ENCODE measurements at regions of chr13 and their contacts with region 1.

Region 1: GRCh38 chr13:45119991-45120864 is at the start of gene GTF2F2:
- DNase-seq: peak; percentile 85
- H3K4me3 Mint-ChIP-seq: no peak within 1 kb of the TSS
- H3K27ac Mint-ChIP-seq: no peak within 1 kb of the TSS
- H3K4me1 Mint-ChIP-seq: peaks cover 8% of the 10 kb centered on the region
- H3K27me3 Mint-ChIP-seq: no peaks in the 10 kb centered on the region
- CTCF ChIP-seq: no peak
- total RNA-seq, gene GTF2F2: 41.2 and 47.4 TPM in 2 replicates

Region 2: DNA sequence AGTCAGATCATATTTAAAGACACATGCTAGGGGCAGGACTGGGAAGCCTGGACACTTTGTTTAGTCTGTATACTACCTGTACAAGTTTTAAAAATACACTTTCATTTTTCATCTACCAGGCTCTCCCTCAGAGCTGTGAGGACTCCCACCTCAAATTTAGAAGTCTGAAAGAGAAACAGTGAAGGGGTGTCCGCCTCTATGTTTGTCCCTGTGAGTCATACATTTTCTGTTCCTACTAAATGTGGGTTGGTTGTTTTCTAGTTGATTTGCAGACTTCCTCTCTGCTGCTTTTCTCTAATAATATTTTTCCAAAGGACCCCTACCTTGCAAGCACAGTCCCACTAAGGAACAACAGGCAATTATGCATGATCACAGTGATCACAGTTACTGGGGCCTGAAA is 1443.9 kb before region 1 on chr13:
- CTCF ChIA-PET with region 1: no interaction called
- POLR2A ChIA-PET with region 1: no interaction called
- intact Hi-C with region 1: no loop called
- DNase-seq: no peak
- H3K4me3 Mint-ChIP-seq: no peak overlapping the region
- H3K27ac Mint-ChIP-seq: no peak overlapping the region
- H3K4me1 Mint-ChIP-seq: no peaks in the 10 kb centered on the region
- H3K27me3 Mint-ChIP-seq: no peaks in the 10 kb centered on the region
- CTCF ChIP-seq: no peak

Region 3: DNA sequence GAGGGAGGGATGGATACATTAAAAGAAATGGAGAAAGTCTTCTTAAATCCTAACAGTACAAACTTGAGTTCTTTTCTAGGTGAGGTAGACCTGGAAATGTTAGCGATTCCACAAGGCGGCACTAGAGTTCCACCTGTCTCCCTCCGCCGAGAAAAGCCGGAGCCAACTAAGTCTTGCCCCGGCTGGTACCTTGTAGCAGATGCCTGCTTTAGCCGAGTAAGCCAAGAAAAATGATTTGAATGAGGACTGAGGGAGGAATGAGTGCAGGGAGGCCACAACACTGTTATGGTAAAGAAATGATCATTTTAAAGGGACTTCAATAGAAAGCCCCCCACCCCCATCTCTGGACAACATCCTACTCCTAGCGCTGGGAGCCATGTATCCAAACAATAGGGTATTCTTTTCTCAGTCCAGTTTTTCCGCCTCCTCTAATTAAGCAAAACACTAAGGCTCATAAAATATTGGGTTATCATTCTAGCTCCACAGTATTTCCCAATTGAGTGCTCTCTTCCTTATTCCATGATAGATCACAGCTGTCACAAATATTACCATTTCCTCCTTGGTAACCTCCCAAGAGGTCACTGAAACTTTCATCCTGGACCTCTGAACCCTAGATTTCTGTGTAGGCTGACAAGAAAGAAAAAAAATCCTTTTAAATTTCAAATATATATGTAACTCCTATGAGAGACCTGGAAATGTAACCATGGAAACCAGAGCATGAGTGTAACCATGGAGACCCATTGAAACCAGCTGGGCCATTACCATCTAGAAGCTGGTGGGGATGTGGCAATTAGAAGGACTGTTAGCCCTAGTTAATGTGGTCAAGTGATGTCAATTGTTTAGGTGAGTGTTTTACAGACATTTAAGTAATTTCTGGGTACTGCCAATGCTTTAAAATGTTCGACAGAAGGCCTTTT is 72.6 kb before region 1 on chr13:
- CTCF ChIA-PET with region 1: interaction called, 6 read pairs
- POLR2A ChIA-PET with region 1: interaction called, 21 read pairs
- intact Hi-C with region 1: loop called (anchors 2 kb)
- DNase-seq: peak; percentile 86
- H3K4me3 Mint-ChIP-seq: peak overlapping the region; percentile 64
- H3K27ac Mint-ChIP-seq: no peak overlapping the region
- H3K4me1 Mint-ChIP-seq: peaks cover 10% of the 10 kb centered on the region
- H3K27me3 Mint-ChIP-seq: no peaks in the 10 kb centered on the region
- CTCF ChIP-seq: peak; percentile 92

Region 4: GRCh38 chr13:45133396-45134118 is 13.3 kb after region 1 on chr13:
- CTCF ChIA-PET with region 1: interaction called, 3 read pairs
- POLR2A ChIA-PET with region 1: interaction called, 46 read pairs
- intact Hi-C with region 1: no loop called
- DNase-seq: no peak
- H3K4me3 Mint-ChIP-seq: no peak overlapping the region
- H3K27ac Mint-ChIP-seq: no peak overlapping the region
- H3K4me1 Mint-ChIP-seq: peaks cover 30% of the 10 kb centered on the region
- H3K27me3 Mint-ChIP-seq: no peaks in the 10 kb centered on the region
- CTCF ChIP-seq: no peak

Region 5: DNA sequence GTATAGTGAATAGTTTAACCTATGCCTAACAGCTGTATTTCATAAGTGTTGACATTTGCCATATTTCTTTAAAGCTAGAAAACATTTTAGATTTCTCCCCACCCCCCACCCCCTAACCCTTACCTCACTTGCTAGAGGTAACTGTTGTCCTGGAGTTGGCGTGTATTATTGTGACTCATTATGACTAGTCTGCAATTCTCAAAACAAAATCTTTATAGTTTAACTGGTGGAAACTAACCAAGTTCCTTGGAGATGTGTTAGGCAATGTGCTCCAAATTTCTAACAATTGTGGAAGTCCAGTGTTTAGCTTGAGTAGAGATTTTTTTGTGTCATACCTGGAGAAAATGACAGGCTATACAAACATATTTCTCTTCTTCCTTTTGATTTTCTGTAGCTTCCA is 42.6 kb after region 1 on chr13:
- CTCF ChIA-PET with region 1: no interaction called
- POLR2A ChIA-PET with region 1: interaction called, 87 read pairs
- intact Hi-C with region 1: no loop called
- DNase-seq: peak; percentile 92
- H3K4me3 Mint-ChIP-seq: peak overlapping the region; percentile 35
- H3K27ac Mint-ChIP-seq: peak overlapping the region; percentile 91
- H3K4me1 Mint-ChIP-seq: peaks cover 9% of the 10 kb centered on the region
- H3K27me3 Mint-ChIP-seq: no peaks in the 10 kb centered on the region
- CTCF ChIP-seq: no peak

Region 6: DNA sequence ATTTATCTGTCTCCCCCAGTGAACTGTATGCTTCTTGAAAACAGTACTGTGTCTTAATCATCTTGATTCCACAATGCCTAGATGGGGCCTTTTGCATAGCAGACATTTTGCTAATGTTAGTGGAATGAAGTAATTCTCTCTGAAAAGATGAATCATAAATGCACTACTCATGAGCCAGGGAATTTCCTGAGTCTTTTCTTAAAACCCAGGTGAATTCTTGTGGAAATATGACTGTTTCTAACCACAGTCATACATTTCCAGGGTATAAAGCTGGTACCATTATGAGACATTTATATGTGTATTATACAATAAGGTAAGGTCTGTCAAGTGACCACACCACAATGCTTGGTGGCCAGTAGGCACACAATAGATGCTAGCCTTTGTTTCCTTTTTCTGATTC is 86.1 kb after region 1 on chr13:
- CTCF ChIA-PET with region 1: no interaction called
- POLR2A ChIA-PET with region 1: interaction called, 15 read pairs
- intact Hi-C with region 1: no loop called
- DNase-seq: peak; percentile 88
- H3K4me3 Mint-ChIP-seq: peak overlapping the region; percentile 56
- H3K27ac Mint-ChIP-seq: peak overlapping the region; percentile 88
- H3K4me1 Mint-ChIP-seq: peaks cover 47% of the 10 kb centered on the region
- H3K27me3 Mint-ChIP-seq: no peaks in the 10 kb centered on the region
- CTCF ChIP-seq: no peak

Measured in MCF 10A (cell line).